ENCODE measurements at regions of chr15 and their contacts with region 1.

Region 1: DNA sequence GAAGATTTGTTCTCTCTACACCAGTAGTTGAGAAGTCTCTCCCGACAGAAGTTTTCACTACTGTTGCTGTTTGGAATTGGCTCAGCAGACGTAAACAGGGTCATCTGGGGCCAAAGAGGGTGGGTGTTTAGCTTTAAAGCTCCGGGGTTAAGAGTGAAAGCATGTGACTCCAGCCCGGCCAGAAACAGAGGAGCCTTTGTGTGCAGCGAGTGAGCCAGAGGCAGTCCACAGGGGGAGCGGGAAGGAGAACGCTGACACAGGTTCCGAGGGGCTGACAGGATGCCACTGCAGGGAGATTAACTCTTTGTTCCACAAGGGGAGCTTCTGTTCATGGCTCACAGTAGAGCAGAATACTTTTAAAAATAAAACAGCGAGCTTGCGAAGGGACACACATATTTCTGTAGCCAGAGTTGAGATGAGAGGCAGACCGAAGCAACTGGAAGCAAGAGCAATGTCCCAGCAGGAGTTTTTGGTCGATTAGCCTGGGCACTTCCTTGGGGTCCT is 26.9 kb downstream of the BMF start:
- DNase-seq: no peak
- ATAC-seq: peak; percentile 72
- H3K4me3 ChIP-seq: peak overlapping the region; percentile 12; the same call in 1 of the 2 replicates
- H3K27ac ChIP-seq: no peak overlapping the region; the same call in 1 of the 2 replicates
- H3K4me1 ChIP-seq: peaks cover 37% of the 10 kb centered on the region
- H3K27me3 ChIP-seq: no peaks in the 10 kb centered on the region
- CTCF ChIP-seq: no peak
- EP300 ChIP-seq: peak in 1 of 2 experiments; percentile 25; a peak in 1 of 4 replicates
- POLR2A ChIP-seq: no peak
- RAD21 ChIP-seq: no peak

Region 2: DNA sequence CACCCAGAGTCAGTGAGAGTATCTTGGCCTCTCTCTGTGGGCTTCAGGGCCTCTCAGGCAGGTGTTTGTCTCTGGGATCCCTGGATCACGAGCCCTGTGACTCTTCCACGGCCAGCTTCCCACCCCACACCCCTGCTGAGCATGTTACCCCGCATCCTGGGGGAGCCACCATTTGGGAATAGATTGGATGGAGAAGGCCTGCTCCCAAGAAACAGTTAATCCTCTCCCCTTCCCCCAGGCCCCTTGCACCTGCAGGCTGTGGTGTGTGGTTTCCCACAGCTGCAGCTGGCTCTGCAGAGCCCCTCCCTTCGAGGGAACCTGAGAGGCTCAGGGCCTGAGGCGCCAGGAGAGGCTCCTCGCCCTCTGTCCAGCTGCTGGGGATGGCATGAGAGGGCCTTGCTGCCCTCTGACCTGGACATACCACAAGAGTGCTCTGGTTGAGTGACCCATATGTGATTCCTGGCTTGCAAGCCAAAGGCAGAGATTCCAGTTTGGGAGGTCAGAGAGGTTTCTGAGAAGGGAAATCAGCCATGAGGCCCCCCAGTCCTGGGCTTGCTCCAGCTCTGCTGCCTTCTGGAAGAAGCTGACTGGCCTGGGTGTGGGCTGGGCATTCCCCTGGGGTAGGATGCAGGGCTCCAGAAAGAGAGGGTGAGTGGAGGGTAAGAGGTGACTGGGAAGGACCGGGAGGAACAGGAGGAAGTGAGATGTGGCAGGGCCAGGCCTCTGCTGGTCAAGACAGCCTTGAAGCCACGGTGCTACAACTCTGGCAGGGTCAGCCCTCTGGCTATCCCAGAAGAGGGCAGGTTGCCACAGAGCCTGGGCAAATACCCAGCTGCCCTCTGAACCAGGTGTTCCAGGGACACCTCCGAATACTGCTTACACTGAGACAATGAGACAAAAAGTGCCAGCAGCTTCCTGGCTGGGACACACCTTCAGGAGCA is 26.9 kb before region 1 on chr15:
- CTCF ChIA-PET with region 1: interaction called, 6 read pairs
- POLR2A ChIA-PET with region 1: interaction called, 6 read pairs
- RAD21 ChIA-PET with region 1: interaction called, 3 read pairs
- SMC1A ChIA-PET with region 1: interaction called, 35 read pairs
- in situ Hi-C with region 1: no loop called
- intact Hi-C with region 1: no loop called
- DNase-seq: no peak
- ATAC-seq: peak; percentile 86
- H3K4me3 ChIP-seq: no peak overlapping the region
- H3K27ac ChIP-seq: peak overlapping the region; percentile 89
- H3K4me1 ChIP-seq: peaks cover 58% of the 10 kb centered on the region
- H3K27me3 ChIP-seq: no peaks in the 10 kb centered on the region
- CTCF ChIP-seq: no peak
- EP300 ChIP-seq: peak; percentile 72 to 83; a peak in 3 of 4 replicates
- POLR2A ChIP-seq: peak; percentile 60
- RAD21 ChIP-seq: 0 out of 2 replicates have a peak, but pooled peaks have one; percentile 18

Region 3: GRCh38 chr15:40136470-40137302 is 54.9 kb after region 1 on chr15:
- CTCF ChIA-PET with region 1: no interaction called
- POLR2A ChIA-PET with region 1: no interaction called
- RAD21 ChIA-PET with region 1: no interaction called
- SMC1A ChIA-PET with region 1: no interaction called
- in situ Hi-C with region 1: no loop called
- intact Hi-C with region 1: no loop called
- DNase-seq: no peak
- ATAC-seq: no peak
- H3K4me3 ChIP-seq: no peak overlapping the region
- H3K27ac ChIP-seq: no peak overlapping the region
- H3K4me1 ChIP-seq: no peaks in the 10 kb centered on the region
- H3K27me3 ChIP-seq: no peaks in the 10 kb centered on the region
- CTCF ChIP-seq: no peak
- EP300 ChIP-seq: no peak
- POLR2A ChIP-seq: no peak
- RAD21 ChIP-seq: no peak

Measured in GM12878 (cell line).